ENCODE measurements at regions of chr1 and their contacts with region 1.

Region 1: DNA sequence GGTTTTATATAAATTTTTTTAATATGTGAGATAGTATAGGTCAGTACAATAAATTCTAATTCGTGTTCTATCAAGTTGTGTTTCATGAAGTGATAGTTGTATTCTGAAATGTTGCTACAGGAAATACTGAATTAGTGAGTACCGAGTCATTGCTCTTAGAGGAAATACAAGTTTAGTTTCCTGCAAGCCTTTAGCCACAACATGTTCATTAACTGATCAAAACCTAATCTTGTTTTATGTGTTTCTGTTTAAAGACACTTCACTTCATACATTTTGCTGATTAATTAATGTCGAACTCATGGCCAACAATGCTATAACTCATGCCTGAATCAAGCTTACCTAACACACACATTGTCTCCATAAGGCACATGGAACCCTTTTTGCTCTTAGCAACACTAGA is 43.6 kb downstream of the LRRC7 start:
- DNase-seq: no peak
- ATAC-seq: no peak
- H3K4me3 ChIP-seq: no peak overlapping the region
- H3K27ac ChIP-seq: no peak overlapping the region
- H3K4me1 ChIP-seq: no peaks in the 10 kb centered on the region
- H3K27me3 ChIP-seq: no peaks in the 10 kb centered on the region
- CTCF ChIP-seq: no peak

Region 2: DNA sequence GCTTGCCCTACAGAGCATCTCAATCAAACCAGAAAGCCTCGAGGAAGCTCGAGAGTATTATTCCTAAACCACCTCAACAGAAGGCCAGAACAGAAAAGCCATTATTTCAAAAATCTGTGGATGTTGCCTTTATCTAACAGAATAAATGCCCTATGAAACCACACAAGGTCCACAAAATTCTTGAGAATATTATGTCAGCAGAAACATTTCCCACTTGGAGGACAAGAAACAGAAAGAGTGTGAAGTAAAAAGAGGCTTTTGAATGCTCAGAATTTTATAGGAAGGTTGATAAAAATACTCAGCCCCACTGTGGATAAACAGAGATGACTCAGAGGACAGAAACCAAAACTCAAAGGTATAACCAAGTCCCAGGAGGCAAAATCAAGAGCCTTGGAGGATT is 190.0 kb before region 1 on chr1:
- intact Hi-C with region 1: no loop called
- DNase-seq: no peak
- ATAC-seq: no peak
- H3K4me3 ChIP-seq: no peak overlapping the region
- H3K27ac ChIP-seq: no peak overlapping the region
- H3K4me1 ChIP-seq: no peaks in the 10 kb centered on the region
- H3K27me3 ChIP-seq: no peaks in the 10 kb centered on the region
- CTCF ChIP-seq: no peak

Region 3: DNA sequence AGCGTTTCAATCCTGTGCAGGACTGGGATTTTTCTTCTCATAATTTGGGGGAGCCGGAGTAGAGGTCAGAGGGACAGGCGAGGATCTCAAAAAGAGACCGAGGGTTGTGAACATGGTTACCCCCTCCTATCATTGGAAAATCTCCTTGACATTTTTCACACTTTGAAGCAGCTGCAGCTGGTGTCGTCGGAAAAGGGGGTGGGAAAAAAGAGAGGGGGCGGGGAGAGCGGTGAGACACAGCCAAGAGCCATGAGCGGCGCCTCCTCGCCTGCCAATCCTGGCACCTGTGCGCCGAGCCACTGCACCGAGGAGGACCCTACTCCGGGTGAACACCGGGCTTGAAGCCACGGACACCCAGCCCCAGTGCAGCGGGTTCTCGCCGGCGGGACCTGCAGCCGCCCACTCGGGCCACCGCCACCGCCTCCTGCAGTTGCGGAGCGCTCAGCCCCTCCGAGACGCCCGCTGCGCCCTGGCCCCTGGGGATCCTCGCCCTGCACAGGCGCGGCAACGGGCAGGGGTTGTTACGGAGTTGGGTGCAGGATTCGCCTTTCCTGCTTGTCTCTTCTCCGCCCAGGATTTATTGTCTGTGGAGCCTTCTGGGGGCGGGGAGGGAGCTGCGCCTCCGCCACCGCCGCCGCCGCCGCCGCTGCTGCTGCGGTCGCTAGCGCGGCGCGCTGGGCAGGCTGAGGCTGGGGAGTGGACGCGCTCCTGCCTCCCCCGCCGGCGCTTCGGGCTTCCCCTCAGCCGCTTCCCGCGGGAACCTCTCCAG is 43.5 kb before region 1 on chr1 and contains the start of gene LRRC7:
- intact Hi-C with region 1: no loop called
- DNase-seq: peak in 1 of 2 donors; percentile 68
- ATAC-seq: peak; percentile 51 to 75 (median 64)
- H3K4me3 ChIP-seq: peak within 1 kb of the TSS; percentile 72
- H3K27ac ChIP-seq: peak within 1 kb of the TSS; percentile 48
- H3K4me1 ChIP-seq: no peaks in the 10 kb centered on the region
- H3K27me3 ChIP-seq: peaks cover 0 to 40% (median 10%) of the 10 kb centered on the region in 3 donors
- CTCF ChIP-seq: no peak
- total RNA-seq, gene LRRC7: 0.96 to 1.2 TPM in 2 of 4 donors, not detected in the others

Region 4: GRCh38 chr1:69643266-69643665 is 31.9 kb after region 1 on chr1:
- intact Hi-C with region 1: loop called in 1 of 2 experiments (anchors 2 kb)
- DNase-seq: no peak
- ATAC-seq: no peak
- H3K4me3 ChIP-seq: no peak overlapping the region
- H3K27ac ChIP-seq: no peak overlapping the region
- H3K4me1 ChIP-seq: no peaks in the 10 kb centered on the region
- H3K27me3 ChIP-seq: no peaks in the 10 kb centered on the region
- CTCF ChIP-seq: no peak

Region 5: DNA sequence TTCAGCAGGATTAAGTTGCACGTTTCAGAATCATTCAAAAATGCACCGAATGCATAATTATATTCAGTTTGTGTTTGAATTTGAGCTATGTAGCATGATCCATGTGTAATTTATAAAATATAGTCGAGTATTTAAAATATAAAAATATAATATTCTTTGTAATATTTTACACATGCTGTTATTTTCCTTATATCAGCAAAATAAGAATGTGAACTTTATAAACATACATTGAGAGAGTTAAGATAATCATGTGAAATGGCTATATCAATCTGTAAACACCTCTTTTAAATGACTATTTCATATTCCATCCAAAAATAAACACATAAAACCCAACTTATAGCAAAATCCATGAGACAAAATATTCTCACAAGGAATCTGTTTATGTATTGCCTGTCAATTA is 260.1 kb after region 1 on chr1:
- intact Hi-C with region 1: no loop called
- DNase-seq: no peak
- ATAC-seq: no peak
- H3K4me3 ChIP-seq: no peak overlapping the region
- H3K27ac ChIP-seq: no peak overlapping the region
- H3K4me1 ChIP-seq: no peaks in the 10 kb centered on the region
- H3K27me3 ChIP-seq: no peaks in the 10 kb centered on the region
- CTCF ChIP-seq: no peak